CD8-positive, alpha-beta T cell (primary cell): ENCODE measurements at regions of chr5 and their contacts with region 1.

Region 1: DNA sequence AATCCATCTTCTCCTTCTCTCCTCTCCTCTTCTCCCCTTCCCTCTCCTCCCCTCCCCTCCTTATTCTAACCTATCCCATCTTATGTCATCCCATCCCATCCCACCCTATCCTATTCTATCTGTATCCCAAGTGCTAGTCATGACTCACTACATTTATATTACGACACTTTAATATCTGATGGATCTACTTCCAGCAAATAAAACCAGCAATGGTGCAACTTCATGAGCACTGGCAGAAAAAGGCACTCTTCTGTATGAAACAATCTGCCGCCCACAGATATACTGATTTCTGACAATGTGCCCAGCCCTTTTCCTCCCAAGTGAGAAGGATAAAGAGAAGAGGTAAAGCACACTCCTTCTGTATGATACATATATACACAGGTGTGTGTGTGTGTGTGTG is 86.6 kb upstream of the ANKH start:
- DNase-seq: no peak
- ATAC-seq: no peak
- H3K4me3 ChIP-seq: no peak overlapping the region
- H3K4me3 Mint-ChIP-seq: no peak overlapping the region
- H3K27ac ChIP-seq: no peak overlapping the region
- H3K27ac Mint-ChIP-seq: no peak overlapping the region
- H3K4me1 ChIP-seq: no peaks in the 10 kb centered on the region
- H3K4me1 Mint-ChIP-seq: no peaks in the 10 kb centered on the region
- H3K27me3 ChIP-seq: no peaks in the 10 kb centered on the region
- H3K27me3 Mint-ChIP-seq: no peaks in the 10 kb centered on the region
- CTCF ChIP-seq: no peak

Region 2: GRCh38 chr5:14734396-14734795 is 223.8 kb before region 1 on chr5:
- CTCF ChIA-PET with region 1: no interaction called
- POLR2A ChIA-PET with region 1: no interaction called
- intact Hi-C with region 1: no loop called
- DNase-seq: no peak
- ATAC-seq: no peak
- H3K4me3 ChIP-seq: no peak overlapping the region
- H3K4me3 Mint-ChIP-seq: no peak overlapping the region
- H3K27ac ChIP-seq: no peak overlapping the region
- H3K27ac Mint-ChIP-seq: peak overlapping the region; percentile 14
- H3K4me1 ChIP-seq: no peaks in the 10 kb centered on the region
- H3K4me1 Mint-ChIP-seq: no peaks in the 10 kb centered on the region
- H3K27me3 ChIP-seq: no peaks in the 10 kb centered on the region
- H3K27me3 Mint-ChIP-seq: no peaks in the 10 kb centered on the region
- CTCF ChIP-seq: no peak

Region 3: DNA sequence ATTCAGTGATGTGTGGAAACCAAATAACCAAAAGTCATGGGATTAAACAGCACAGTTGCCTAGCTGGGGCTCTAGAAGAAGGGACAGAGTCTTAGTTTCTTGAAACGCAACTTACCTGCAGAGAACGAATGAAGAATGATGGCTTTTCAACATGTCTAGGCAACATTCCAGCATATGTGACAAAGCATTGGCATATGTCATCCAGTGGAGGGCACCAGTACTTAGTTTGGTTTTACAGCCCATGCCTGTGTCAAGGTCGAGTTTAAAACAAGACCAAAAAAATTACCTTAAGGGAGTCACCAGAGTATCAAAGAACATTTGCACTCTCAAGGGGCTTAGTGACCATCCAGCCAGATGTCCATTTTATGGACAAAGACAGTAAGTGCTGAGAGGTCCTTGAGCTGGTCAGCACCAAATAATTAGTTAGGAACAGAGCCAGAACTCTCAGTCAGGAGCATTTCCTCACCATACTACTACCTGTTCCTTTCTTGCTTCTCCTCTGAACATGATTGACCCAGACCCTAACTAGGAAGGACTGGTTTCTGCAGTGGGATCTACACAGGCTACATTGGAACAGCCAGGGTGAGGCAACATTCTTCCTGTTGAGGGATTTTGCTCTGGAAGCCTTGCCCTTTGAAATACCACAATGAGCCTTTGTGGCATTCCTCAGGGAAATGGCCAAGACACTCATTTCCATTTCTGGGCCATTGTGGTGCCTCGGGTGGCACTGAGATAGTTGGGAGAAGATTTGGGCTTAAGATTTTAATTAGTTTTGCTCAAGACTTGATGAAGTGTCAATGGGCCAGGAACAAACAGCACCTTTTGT is 11.2 kb before region 1 on chr5:
- CTCF ChIA-PET with region 1: interaction called, 17 read pairs
- POLR2A ChIA-PET with region 1: no interaction called
- intact Hi-C with region 1: no loop called
- DNase-seq: peak in 7 of 9 experiments; percentile 15 to 76 (median 38)
- ATAC-seq: peak; percentile 97
- H3K4me3 ChIP-seq: no peak overlapping the region
- H3K4me3 Mint-ChIP-seq: no peak overlapping the region
- H3K27ac ChIP-seq: no peak overlapping the region
- H3K27ac Mint-ChIP-seq: no peak overlapping the region
- H3K4me1 ChIP-seq: no peaks in the 10 kb centered on the region
- H3K4me1 Mint-ChIP-seq: peaks cover 4% of the 10 kb centered on the region
- H3K27me3 ChIP-seq: no peaks in the 10 kb centered on the region
- H3K27me3 Mint-ChIP-seq: peaks cover 14% of the 10 kb centered on the region
- CTCF ChIP-seq: peak; percentile 68

Region 4: GRCh38 chr5:14983666-14984441 is 25.7 kb after region 1 on chr5:
- CTCF ChIA-PET with region 1: interaction called, 11 read pairs
- POLR2A ChIA-PET with region 1: interaction called, 3 read pairs
- intact Hi-C with region 1: no loop called
- DNase-seq: peak in 7 of 9 experiments; percentile 23 to 62 (median 37)
- ATAC-seq: peak; percentile 88
- H3K4me3 ChIP-seq: no peak overlapping the region
- H3K4me3 Mint-ChIP-seq: peak overlapping the region; percentile 26
- H3K27ac ChIP-seq: no peak overlapping the region
- H3K27ac Mint-ChIP-seq: no peak overlapping the region
- H3K4me1 ChIP-seq: peaks cover 20% of the 10 kb centered on the region
- H3K4me1 Mint-ChIP-seq: peaks cover 27% of the 10 kb centered on the region
- H3K27me3 ChIP-seq: no peaks in the 10 kb centered on the region
- H3K27me3 Mint-ChIP-seq: no peaks in the 10 kb centered on the region
- CTCF ChIP-seq: no peak

Region 5: GRCh38 chr5:15003511-15003920 is 45.3 kb after region 1 on chr5:
- CTCF ChIA-PET with region 1: interaction called, 86 read pairs
- POLR2A ChIA-PET with region 1: no interaction called
- intact Hi-C with region 1: loop called (anchors 1 kb)
- DNase-seq: peak; percentile 24 to 82 (median 53)
- ATAC-seq: peak; percentile 99
- H3K4me3 ChIP-seq: no peak overlapping the region
- H3K4me3 Mint-ChIP-seq: no peak overlapping the region
- H3K27ac ChIP-seq: no peak overlapping the region
- H3K27ac Mint-ChIP-seq: no peak overlapping the region
- H3K4me1 ChIP-seq: no peaks in the 10 kb centered on the region
- H3K4me1 Mint-ChIP-seq: no peaks in the 10 kb centered on the region
- H3K27me3 ChIP-seq: no peaks in the 10 kb centered on the region
- H3K27me3 Mint-ChIP-seq: peaks cover 5% of the 10 kb centered on the region
- CTCF ChIP-seq: peak; percentile 78

Region 6: GRCh38 chr5:15013654-15014463 is 55.7 kb after region 1 on chr5:
- CTCF ChIA-PET with region 1: interaction called, 21 read pairs
- POLR2A ChIA-PET with region 1: no interaction called
- intact Hi-C with region 1: no loop called
- DNase-seq: peak in 2 of 9 experiments; percentile 44 to 59
- ATAC-seq: peak; percentile 44
- H3K4me3 ChIP-seq: no peak overlapping the region
- H3K4me3 Mint-ChIP-seq: no peak overlapping the region
- H3K27ac ChIP-seq: no peak overlapping the region
- H3K27ac Mint-ChIP-seq: no peak overlapping the region
- H3K4me1 ChIP-seq: no peaks in the 10 kb centered on the region
- H3K4me1 Mint-ChIP-seq: no peaks in the 10 kb centered on the region
- H3K27me3 ChIP-seq: no peaks in the 10 kb centered on the region
- H3K27me3 Mint-ChIP-seq: peaks cover 3% of the 10 kb centered on the region
- CTCF ChIP-seq: peak; percentile 74

Region 7: DNA sequence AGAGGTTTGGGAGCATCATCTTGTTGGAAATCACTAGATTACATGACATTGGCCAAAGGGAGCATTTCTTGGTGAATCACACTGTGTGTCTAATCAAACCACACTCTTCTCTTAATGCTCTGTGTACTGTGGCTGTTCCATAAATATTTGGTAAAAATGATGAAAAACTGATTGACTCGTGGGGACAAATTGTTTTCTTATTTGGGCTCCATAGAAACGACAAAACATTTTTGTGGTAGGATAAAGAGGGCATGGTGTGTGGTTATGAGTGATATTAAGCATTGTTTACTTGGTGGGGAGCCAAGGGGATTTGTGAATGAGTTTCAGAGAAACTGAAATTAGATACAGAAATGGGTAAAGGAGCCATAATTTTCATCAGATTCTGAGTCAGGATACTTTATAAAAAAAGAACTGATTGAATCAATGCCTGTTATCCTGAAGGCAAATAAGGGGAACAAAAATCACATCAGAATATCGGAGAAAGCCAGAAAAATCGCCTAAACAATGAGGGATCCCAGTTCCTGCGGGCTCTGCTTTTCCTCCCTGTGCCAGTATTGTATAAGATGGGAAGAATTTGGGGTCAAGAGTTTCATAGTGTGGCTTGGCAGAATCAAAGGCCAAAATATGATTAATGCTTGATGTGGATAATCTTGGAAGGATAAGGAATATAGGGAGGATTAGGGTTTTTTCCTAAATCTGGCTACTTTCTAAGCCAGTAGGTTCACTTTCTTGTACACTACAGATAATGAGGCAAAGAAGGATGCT is 575.1 kb after region 1 on chr5:
- CTCF ChIA-PET with region 1: no interaction called
- POLR2A ChIA-PET with region 1: no interaction called
- intact Hi-C with region 1: no loop called
- DNase-seq: no peak
- ATAC-seq: no peak
- H3K4me3 ChIP-seq: no peak overlapping the region
- H3K4me3 Mint-ChIP-seq: no peak overlapping the region
- H3K27ac ChIP-seq: no peak overlapping the region
- H3K27ac Mint-ChIP-seq: no peak overlapping the region
- H3K4me1 ChIP-seq: no peaks in the 10 kb centered on the region
- H3K4me1 Mint-ChIP-seq: no peaks in the 10 kb centered on the region
- H3K27me3 ChIP-seq: no peaks in the 10 kb centered on the region
- H3K27me3 Mint-ChIP-seq: no peaks in the 10 kb centered on the region
- CTCF ChIP-seq: no peak